ENCODE measurements at regions of chr5 and their contacts with region 1.

Region 1: GRCh38 chr5:1763548-1763911 is 36.1 kb downstream of the MRPL36 start:
- DNase-seq: peak; percentile 19 to 35
- ATAC-seq: peak in 4 of 8 donors; percentile 67 to 74 (median 69)
- H3K4me3 ChIP-seq: no peak overlapping the region
- H3K27ac ChIP-seq: no peak overlapping the region
- H3K4me1 ChIP-seq: no peaks in the 10 kb centered on the region
- H3K27me3 ChIP-seq: peaks cover 0 to 54% (median 15%) of the 10 kb centered on the region in 7 donors
- CTCF ChIP-seq: peak; percentile 24 to 81 (median 71)

Region 2: DNA sequence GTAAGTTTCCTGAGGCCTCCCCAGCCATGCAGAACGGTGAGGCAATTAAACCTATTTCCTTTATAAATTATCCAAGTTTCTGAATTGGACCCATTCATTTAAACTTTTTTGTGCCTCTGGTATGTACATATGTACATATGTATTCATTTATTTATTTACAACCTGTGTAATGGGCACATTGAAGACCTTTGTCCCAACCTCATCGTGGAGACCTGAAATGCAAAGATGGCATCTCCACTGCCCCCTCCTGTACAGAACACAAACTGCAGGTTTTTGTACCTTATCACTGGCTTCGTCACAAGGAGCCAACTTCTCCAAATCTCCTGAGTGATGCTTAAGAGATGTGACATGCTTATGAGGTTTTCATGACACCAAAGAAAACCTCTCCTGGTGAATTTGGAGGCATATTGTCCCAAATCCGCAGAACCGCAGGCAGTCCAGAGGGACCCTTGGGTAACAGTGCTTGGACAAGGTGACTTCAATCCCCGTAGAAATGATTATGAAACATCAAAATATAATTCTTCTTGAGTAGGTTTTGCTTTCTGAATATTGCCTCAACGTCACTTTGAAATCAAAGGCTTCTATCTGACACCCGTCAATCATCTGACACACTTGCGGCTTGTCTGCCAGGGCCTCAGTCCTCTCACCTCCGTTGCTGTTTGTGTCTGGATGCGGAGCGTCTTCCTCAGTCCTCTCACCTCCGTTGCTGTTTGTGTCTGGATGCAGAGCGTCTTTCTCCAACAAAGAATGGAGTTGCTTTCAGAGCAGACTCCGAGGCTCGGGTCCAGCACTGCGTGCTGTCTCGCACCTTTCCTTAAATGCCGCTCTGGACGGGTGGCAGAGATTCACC is 254.2 kb after region 1 on chr5:
- intact Hi-C with region 1: loop called in 1 of 10 experiments (anchors 10 kb)
- DNase-seq: no peak
- ATAC-seq: no peak
- H3K4me3 ChIP-seq: no peak overlapping the region
- H3K27ac ChIP-seq: no peak overlapping the region
- H3K4me1 ChIP-seq: peaks cover 0 to 13% (median 0%) of the 10 kb centered on the region in 9 donors
- H3K27me3 ChIP-seq: peaks cover 0 to 7% (median 0%) of the 10 kb centered on the region in 7 donors
- CTCF ChIP-seq: peak in 7 of 9 donors; percentile 24 to 49 (median 35)

Region 3: GRCh38 chr5:2047341-2047927 is 283.9 kb after region 1 on chr5:
- intact Hi-C with region 1: loop called in 4 of 10 experiments (anchors 5 to 10 kb)
- DNase-seq: no peak
- ATAC-seq: no peak
- H3K4me3 ChIP-seq: no peak overlapping the region
- H3K27ac ChIP-seq: no peak overlapping the region
- H3K4me1 ChIP-seq: peaks cover 0 to 5% (median 0%) of the 10 kb centered on the region in 9 donors
- H3K27me3 ChIP-seq: peaks cover 0 to 9% (median 0%) of the 10 kb centered on the region in 7 donors
- CTCF ChIP-seq: no peak

Region 4: GRCh38 chr5:2156358-2157059 is 393.0 kb after region 1 on chr5:
- intact Hi-C with region 1: loop called in 3 of 10 experiments (anchors 10 kb)
- DNase-seq: no peak
- ATAC-seq: no peak
- H3K4me3 ChIP-seq: no peak overlapping the region
- H3K27ac ChIP-seq: no peak overlapping the region
- H3K4me1 ChIP-seq: no peaks in the 10 kb centered on the region
- H3K27me3 ChIP-seq: peaks cover 0 to 3% (median 0%) of the 10 kb centered on the region in 7 donors
- CTCF ChIP-seq: no peak

Measured in heart right ventricle (tissue), 16 donors.